ENCODE measurements at regions of chr13 and their contacts with region 1.

Region 1: GRCh38 chr13:114281351-114282040 is at the start of gene UPF3A:
- DNase-seq: peak; percentile 94
- H3K4me3 Mint-ChIP-seq: peak within 1 kb of the TSS; percentile 91
- H3K27ac Mint-ChIP-seq: peak within 1 kb of the TSS; percentile 98
- H3K4me1 Mint-ChIP-seq: peaks cover 46% of the 10 kb centered on the region
- H3K27me3 Mint-ChIP-seq: no peaks in the 10 kb centered on the region
- total RNA-seq, gene UPF3A: 36.9 to 38.7 TPM

Region 2: GRCh38 chr13:113123226-113124201 is 1158.0 kb before region 1 on chr13:
- CTCF ChIA-PET with region 1: no interaction called
- intact Hi-C with region 1: no loop called
- DNase-seq: no peak
- H3K4me3 Mint-ChIP-seq: no peak overlapping the region
- H3K27ac Mint-ChIP-seq: no peak overlapping the region
- H3K4me1 Mint-ChIP-seq: no peaks in the 10 kb centered on the region
- H3K27me3 Mint-ChIP-seq: peaks cover 15% of the 10 kb centered on the region

Region 3: GRCh38 chr13:114234645-114235421 is 46.7 kb before region 1 on chr13 and contains the start of gene CDC16:
- CTCF ChIA-PET with region 1: interaction called, 3 read pairs
- intact Hi-C with region 1: loop called (anchors 1 kb)
- DNase-seq: peak; percentile 92
- H3K4me3 Mint-ChIP-seq: peak within 1 kb of the TSS; percentile 81
- H3K27ac Mint-ChIP-seq: peak within 1 kb of the TSS; percentile 83
- H3K4me1 Mint-ChIP-seq: peaks cover 33% of the 10 kb centered on the region
- H3K27me3 Mint-ChIP-seq: no peaks in the 10 kb centered on the region
- total RNA-seq, gene CDC16: 67.2 to 69.5 TPM

Region 4: GRCh38 chr13:114264886-114265611 is 16.4 kb before region 1 on chr13:
- CTCF ChIA-PET with region 1: no interaction called
- intact Hi-C with region 1: no loop called
- DNase-seq: no peak
- H3K4me3 Mint-ChIP-seq: no peak overlapping the region
- H3K27ac Mint-ChIP-seq: no peak overlapping the region
- H3K4me1 Mint-ChIP-seq: peaks cover 20% of the 10 kb centered on the region
- H3K27me3 Mint-ChIP-seq: no peaks in the 10 kb centered on the region

Region 5: DNA sequence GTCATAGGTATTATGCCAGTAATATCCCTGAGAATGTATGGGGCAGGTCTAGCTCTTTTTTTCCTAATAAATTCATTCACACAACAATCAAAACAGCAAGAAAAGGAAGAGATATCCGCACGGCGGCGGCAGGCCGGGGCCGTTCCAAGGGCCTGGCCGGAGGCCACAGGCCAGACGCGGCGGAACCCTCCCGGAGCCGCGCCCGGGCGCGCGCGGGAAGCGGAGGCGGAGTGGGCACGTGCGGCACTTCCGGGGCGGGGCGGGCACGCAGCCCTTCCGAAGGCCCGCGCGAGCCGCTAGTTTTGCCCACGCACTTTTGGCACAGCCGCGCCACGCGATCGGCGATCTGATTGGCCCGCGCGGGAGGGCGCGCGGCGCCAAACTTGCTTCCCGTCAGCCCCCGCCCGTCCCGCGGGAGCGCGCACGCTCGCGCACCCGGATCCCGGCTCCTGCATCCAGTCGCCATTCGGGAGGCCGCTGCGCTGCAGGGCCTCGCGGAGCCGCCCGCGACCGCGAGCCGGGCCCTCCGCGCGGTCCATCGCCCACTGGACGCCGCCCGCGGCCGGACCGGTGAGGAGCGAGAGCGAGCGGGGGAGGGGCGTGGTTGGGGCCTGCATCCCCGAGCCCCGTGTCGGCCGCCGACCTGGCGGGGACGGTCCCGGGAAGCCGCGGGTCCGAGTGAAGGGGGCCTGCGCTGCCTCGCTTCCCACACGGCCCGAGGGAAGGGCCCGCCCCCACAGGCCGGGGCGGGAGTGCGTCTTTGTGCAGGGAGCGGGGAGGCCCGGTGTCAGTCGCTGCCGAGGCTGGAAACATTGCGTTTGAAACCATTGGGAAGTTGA is 32.8 kb after region 1 on chr13 and contains the start of gene CHAMP1:
- CTCF ChIA-PET with region 1: no interaction called
- intact Hi-C with region 1: loop called (anchors 1 kb)
- DNase-seq: peak; percentile 95
- H3K4me3 Mint-ChIP-seq: peak within 1 kb of the TSS; percentile 84
- H3K27ac Mint-ChIP-seq: peak within 1 kb of the TSS; percentile 100
- H3K4me1 Mint-ChIP-seq: peaks cover 49% of the 10 kb centered on the region
- H3K27me3 Mint-ChIP-seq: no peaks in the 10 kb centered on the region
- total RNA-seq, gene CHAMP1: 50.6 to 52.6 TPM

Region 6: DNA sequence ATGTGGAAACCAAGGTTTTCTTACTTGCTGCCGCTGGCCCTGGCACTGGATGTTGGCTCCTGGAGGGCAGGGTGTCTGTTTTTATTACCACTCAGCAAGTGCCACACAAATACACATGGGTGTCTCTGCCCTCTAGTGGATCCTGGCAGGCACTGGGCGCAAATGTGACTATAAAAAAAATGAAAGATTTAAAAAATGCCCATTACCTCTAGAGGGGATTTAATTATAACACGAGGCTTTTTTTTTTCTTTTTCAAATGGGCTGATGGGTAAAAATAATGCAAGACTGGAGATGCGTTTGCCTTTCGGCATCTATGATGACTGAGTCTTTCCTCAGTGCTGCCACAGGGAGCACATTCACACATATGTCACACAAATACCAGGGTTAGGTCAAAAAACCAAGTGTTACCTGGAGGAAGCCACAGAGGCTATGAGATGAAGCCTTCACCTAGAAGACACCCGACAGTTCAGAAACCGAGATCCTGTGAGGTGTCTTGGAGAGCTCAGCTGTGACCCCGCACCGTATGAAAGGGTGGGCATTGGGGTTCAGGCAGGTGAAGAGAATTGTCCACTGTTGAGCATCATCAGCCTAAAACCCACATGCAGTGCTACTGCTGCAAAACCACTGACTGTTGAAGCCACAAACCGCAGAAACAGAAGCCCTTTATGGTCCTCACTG is 58.5 kb after region 1 on chr13:
- CTCF ChIA-PET with region 1: interaction called, 5 read pairs
- intact Hi-C with region 1: loop called (anchors 1 kb)
- DNase-seq: peak; percentile 66
- H3K4me3 Mint-ChIP-seq: no peak overlapping the region
- H3K27ac Mint-ChIP-seq: peak overlapping the region; percentile 8
- H3K4me1 Mint-ChIP-seq: peaks cover 4% of the 10 kb centered on the region
- H3K27me3 Mint-ChIP-seq: peaks cover 6% of the 10 kb centered on the region

Measured in activated naive CD4-positive, alpha-beta T cell treated with anti-CD3 and anti-CD28 coated beads for 36 hours (primary cell).